ENCODE measurements at regions of chr5 and their contacts with region 1.

Region 1: GRCh38 chr5:21615195-21615765 is 1237.9 kb downstream of the CDH12 start:
- DNase-seq: peak in 1 of 2 experiments; percentile 34
- H3K4me3 ChIP-seq: no peak overlapping the region
- H3K27ac ChIP-seq: no peak overlapping the region
- H3K4me1 ChIP-seq: no peaks in the 10 kb centered on the region
- H3K27me3 ChIP-seq: no peaks in the 10 kb centered on the region
- CTCF ChIP-seq: no peak

Region 2: GRCh38 chr5:21419383-21419782 is 195.9 kb before region 1 on chr5:
- CTCF ChIA-PET with region 1: no interaction called
- POLR2A ChIA-PET with region 1: no interaction called
- intact Hi-C with region 1: no loop called
- DNase-seq: no peak
- H3K4me3 ChIP-seq: no peak overlapping the region
- H3K27ac ChIP-seq: no peak overlapping the region
- H3K4me1 ChIP-seq: no peaks in the 10 kb centered on the region
- H3K27me3 ChIP-seq: no peaks in the 10 kb centered on the region
- CTCF ChIP-seq: no peak

Region 3: GRCh38 chr5:21661184-21661583 is 45.9 kb after region 1 on chr5:
- CTCF ChIA-PET with region 1: no interaction called
- POLR2A ChIA-PET with region 1: no interaction called
- intact Hi-C with region 1: no loop called
- DNase-seq: no peak
- H3K4me3 ChIP-seq: no peak overlapping the region
- H3K27ac ChIP-seq: no peak overlapping the region
- H3K4me1 ChIP-seq: no peaks in the 10 kb centered on the region
- H3K27me3 ChIP-seq: no peaks in the 10 kb centered on the region
- CTCF ChIP-seq: no peak

Region 4: GRCh38 chr5:21701317-21701716 is 86.0 kb after region 1 on chr5:
- CTCF ChIA-PET with region 1: no interaction called
- POLR2A ChIA-PET with region 1: no interaction called
- intact Hi-C with region 1: loop called (anchors 5 kb)
- DNase-seq: no peak
- H3K4me3 ChIP-seq: no peak overlapping the region
- H3K27ac ChIP-seq: no peak overlapping the region
- H3K4me1 ChIP-seq: no peaks in the 10 kb centered on the region
- H3K27me3 ChIP-seq: no peaks in the 10 kb centered on the region
- CTCF ChIP-seq: no peak